Right cardiac atrium (tissue), 5 donors: ENCODE measurements at regions of chr2 and their contacts with region 1.

Region 1: GRCh38 chr2:18741895-18742732 is 152.7 kb upstream of the NT5C1B start:
- DNase-seq: peak; percentile 46 to 77 (median 73)
- ATAC-seq: peak; percentile 77 to 81
- H3K4me3 ChIP-seq: no peak overlapping the region
- H3K27ac ChIP-seq: no peak overlapping the region
- H3K4me1 ChIP-seq: peaks cover 3% of the 10 kb centered on the region
- H3K27me3 ChIP-seq: no peaks in the 10 kb centered on the region

Region 2: DNA sequence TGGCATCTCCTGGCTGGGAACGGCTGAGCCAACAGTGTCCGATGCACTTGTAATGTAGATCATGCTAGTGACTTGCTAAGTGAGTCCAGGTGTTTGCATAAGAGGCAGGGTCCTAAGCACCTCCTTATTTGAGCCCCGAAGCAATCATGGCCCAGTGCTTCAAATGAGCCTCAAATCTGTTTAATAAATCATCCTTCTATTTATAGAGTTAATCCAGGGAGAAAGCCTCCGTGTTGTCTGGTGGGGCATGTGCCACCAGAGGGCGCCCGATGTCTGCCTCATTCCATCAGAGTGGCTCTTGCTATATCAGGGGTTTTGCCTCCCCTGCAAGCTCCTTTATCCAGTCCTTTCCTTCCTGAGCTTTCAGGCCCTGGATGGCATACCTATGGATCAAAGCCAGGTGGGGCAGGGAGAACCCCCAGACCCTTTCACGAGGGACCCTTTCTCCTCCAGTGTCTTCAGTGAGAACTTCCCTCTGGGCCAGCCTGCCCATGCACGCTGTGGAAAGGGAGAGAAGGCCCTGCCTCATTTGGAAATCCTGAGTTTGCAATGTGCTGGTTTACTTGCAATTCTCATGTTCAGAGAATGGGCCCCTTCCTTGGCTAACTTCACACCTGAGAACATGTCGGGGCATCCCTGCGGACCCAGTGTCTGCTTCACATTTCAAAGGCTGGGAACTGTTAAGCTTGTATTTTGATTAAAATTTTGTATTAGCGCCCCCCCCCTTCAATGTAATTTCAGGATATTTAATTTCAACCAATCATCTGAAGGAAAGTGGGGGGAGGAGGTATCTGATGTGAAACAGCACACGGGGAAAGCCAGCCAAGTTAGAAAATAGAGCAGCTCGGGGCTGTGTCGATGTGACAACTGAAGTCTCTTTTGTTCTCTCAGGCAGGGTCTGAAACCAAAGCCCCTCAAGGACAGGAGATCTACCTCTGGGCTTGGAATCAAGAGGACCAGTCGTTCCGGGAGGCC is 221.4 kb before region 1 on chr2:
- intact Hi-C with region 1: loop called (anchors 2 to 10 kb)
- DNase-seq: peak; percentile 86 to 95 (median 93)
- ATAC-seq: peak; percentile 84 to 89
- H3K4me3 ChIP-seq: no peak overlapping the region
- H3K27ac ChIP-seq: peak overlapping the region; percentile 84
- H3K4me1 ChIP-seq: no peaks in the 10 kb centered on the region
- H3K27me3 ChIP-seq: no peaks in the 10 kb centered on the region